Uterus (tissue), 4 donors: ENCODE measurements at regions of chr9 and their contacts with region 1.

Region 1: DNA sequence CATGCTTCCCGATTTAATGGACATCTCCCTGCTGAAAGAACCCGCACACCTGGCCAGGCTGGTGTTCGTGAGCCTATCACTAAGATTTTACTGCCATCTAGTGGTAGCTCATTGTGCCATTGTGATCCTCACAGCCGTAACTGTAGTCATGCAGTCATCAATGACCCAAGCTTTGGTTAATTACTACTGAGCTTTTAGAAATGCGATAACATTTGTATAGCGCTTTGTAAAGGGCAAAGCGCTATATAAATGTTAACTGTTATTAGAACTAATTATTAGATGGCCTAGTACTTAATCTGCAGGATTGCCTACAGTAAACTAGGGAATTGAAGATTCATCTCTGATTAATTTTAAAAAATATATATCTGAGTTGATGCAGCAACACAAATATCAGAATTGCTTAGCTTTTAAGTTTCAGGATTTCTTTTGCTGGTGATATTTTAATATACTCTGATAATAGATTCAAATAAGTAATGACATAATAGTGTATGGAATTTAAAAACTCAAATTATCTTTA is 90.2 kb downstream of the HACD4 start:
- DNase-seq: peak; percentile 25 to 60
- H3K4me3 ChIP-seq: no peak overlapping the region
- H3K27ac ChIP-seq: no peak overlapping the region
- H3K4me1 ChIP-seq: no peaks in the 10 kb centered on the region
- H3K27me3 ChIP-seq: no peaks in the 10 kb centered on the region
- CTCF ChIP-seq: peak; percentile 77 to 86 (median 84)
- POLR2A ChIP-seq: no peak

Region 2: GRCh38 chr9:19925817-19926503 is 1015.3 kb before region 1 on chr9:
- intact Hi-C with region 1: loop called (anchors 5 kb)
- DNase-seq: peak; percentile 66 to 76
- H3K4me3 ChIP-seq: peak overlapping the region; percentile 12 to 39
- H3K27ac ChIP-seq: no peak overlapping the region
- H3K4me1 ChIP-seq: no peaks in the 10 kb centered on the region
- H3K27me3 ChIP-seq: no peaks in the 10 kb centered on the region
- CTCF ChIP-seq: peak; percentile 91 to 98 (median 96)
- POLR2A ChIP-seq: no peak

Region 3: GRCh38 chr9:20835364-20836286 is 105.6 kb before region 1 on chr9:
- intact Hi-C with region 1: no loop called
- DNase-seq: no peak
- H3K4me3 ChIP-seq: no peak overlapping the region
- H3K27ac ChIP-seq: no peak overlapping the region
- H3K4me1 ChIP-seq: no peaks in the 10 kb centered on the region
- H3K27me3 ChIP-seq: no peaks in the 10 kb centered on the region
- CTCF ChIP-seq: no peak
- POLR2A ChIP-seq: no peak